H1 (cell line): ENCODE measurements at regions of chr1 and their contacts with region 1.

Region 1: DNA sequence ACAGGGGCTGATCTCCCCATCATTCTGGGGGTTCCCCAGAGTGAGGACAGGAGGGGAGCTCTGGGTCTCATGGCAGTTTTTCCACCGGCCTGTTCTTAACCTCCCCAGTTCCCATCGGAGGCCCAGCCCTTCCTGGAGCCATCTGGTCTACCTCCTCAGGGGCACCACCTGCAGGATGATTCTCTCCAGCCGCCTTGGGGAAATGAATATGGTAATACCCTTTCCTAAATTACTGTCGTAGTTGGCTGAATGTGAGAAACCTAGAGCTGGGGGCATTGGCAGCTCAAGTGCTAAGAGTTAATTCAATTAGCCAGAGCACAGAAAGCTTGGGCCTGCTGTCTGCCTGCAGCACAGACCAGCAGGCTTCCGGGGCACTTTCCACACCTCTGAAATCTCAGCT is 64.9 kb downstream of the TAS1R2 start:
- DNase-seq: peak; percentile 33 to 78
- H3K4me3 ChIP-seq: no peak overlapping the region; a peak in 1 of 8 replicates
- H3K27ac ChIP-seq: no peak overlapping the region
- H3K4me1 ChIP-seq: peaks cover 3 to 15% (median 7%) of the 10 kb centered on the region in 4 experiments; a peak in 6 of 7 replicates
- H3K27me3 ChIP-seq: peaks cover 0 to 4% (median 0%) of the 10 kb centered on the region in 4 experiments; a peak in 3 of 7 replicates
- CTCF ChIP-seq: peak; percentile 49 to 60 (median 56)
- EP300 ChIP-seq: no peak
- POLR2A ChIP-seq: no peak
- RAD21 ChIP-seq: peak; percentile 41 to 59

Region 2: GRCh38 chr1:18783705-18784481 is 10.7 kb before region 1 on chr1:
- CTCF ChIA-PET with region 1: interaction called, 23 read pairs
- POLR2A ChIA-PET with region 1: interaction called, 4 read pairs
- DNase-seq: no peak
- H3K4me3 ChIP-seq: peak overlapping the region; percentile 28 to 64 (median 38); a peak in 6 of 8 replicates
- H3K27ac ChIP-seq: no peak overlapping the region
- H3K4me1 ChIP-seq: peaks cover 2 to 13% (median 5%) of the 10 kb centered on the region in 4 experiments; a peak in 6 of 7 replicates
- H3K27me3 ChIP-seq: peaks cover 0 to 6% (median 0%) of the 10 kb centered on the region in 4 experiments; a peak in 4 of 7 replicates
- CTCF ChIP-seq: no peak
- EP300 ChIP-seq: no peak
- POLR2A ChIP-seq: no peak
- RAD21 ChIP-seq: no peak

Region 3: GRCh38 chr1:18879791-18880309 is 85.3 kb after region 1 on chr1:
- CTCF ChIA-PET with region 1: no interaction called
- POLR2A ChIA-PET with region 1: no interaction called
- DNase-seq: no peak
- H3K4me3 ChIP-seq: no peak overlapping the region
- H3K27ac ChIP-seq: no peak overlapping the region
- H3K4me1 ChIP-seq: peaks cover 0 to 6% (median 4%) of the 10 kb centered on the region in 4 experiments; a peak in 4 of 7 replicates
- H3K27me3 ChIP-seq: no peaks in the 10 kb centered on the region
- CTCF ChIP-seq: no peak
- EP300 ChIP-seq: no peak
- POLR2A ChIP-seq: no peak
- RAD21 ChIP-seq: no peak